HCT116 (cell line): ENCODE measurements at regions of chr2 and their contacts with region 1.

Region 1: DNA sequence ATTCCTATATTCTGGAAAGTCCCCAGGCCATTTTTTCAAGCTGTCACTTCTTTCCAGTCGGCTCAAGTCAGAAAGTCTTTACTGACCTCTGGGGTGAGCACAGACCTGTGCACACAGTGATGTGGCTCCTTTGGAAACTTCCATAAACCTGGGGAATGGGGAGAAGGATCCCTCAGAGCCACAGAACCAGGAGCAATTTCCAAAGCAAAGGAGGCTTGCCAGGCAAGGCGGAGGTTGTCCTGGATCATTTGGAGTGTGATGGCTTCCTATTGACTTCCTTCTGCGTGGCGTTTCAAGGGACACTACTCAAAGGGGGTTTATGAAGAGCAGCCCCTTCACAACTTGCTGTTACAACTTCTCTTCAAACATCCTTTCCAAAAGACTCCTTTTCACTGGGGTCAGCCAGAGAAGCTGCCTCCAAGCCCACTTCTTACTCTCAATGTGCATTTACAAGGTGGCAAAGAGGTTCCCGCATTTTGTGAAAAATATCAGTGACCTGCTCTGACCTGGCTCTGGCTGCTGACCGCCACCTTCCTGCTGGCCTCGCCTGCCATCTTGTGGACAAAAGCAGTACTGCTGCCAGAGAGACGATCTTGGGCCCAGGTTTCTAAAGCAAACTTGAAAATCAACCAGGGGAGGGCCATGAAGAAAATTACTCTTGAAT is 18.2 kb upstream of the TMEM247 start:
- DNase-seq: peak; percentile 36
- ATAC-seq: peak; percentile 78
- H3K4me3 ChIP-seq: no peak overlapping the region
- H3K27ac ChIP-seq: no peak overlapping the region
- H3K4me1 ChIP-seq: no peaks in the 10 kb centered on the region
- H3K27me3 ChIP-seq: no peaks in the 10 kb centered on the region
- CTCF ChIP-seq: peak; percentile 94 to 99 (median 99)
- POLR2A ChIP-seq: no peak
- RAD21 ChIP-seq: peak; percentile 100

Region 2: GRCh38 chr2:45993476-45993991 is 467.6 kb before region 1 on chr2:
- CTCF ChIA-PET with region 1: interaction called, 3 read pairs
- POLR2A ChIA-PET with region 1: no interaction called
- RAD21 ChIA-PET with region 1: no interaction called
- intact Hi-C with region 1: loop called (anchors 1 kb)
- DNase-seq: peak; percentile 64
- ATAC-seq: peak; percentile 86
- H3K4me3 ChIP-seq: no peak overlapping the region
- H3K27ac ChIP-seq: no peak overlapping the region
- H3K4me1 ChIP-seq: peaks cover 0 to 21% of the 10 kb centered on the region in 2 experiments; a peak in 1 of 4 replicates
- H3K27me3 ChIP-seq: no peaks in the 10 kb centered on the region
- CTCF ChIP-seq: peak; percentile 58 to 82 (median 76); a peak in 5 of 6 replicates
- POLR2A ChIP-seq: no peak
- RAD21 ChIP-seq: peak; percentile 79

Region 3: DNA sequence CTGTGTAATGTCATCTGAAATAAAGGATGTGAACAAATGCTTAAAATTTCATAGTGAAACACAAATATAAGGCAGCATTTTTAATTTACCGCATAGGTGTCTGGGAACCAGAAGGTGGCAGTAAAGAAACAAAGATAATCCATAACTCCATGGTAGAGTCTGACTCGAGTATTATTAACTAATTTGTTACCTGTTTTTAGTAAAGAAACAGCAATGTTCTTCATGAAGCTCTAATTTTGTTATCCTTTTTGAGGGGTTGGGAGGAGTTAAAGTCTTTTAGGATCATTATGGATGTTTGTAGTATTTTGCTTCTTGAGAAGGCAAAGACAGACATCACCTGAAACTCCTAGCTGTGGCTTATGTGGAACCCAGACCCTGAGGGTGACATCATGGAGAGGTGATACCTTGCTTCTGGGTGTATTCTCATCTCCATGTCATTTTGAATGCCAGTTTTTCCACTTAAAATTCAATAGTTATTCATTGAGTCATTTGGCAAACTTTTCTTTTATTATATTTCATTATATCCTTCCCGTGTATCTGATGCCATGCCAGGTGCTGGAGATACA is 450.1 kb before region 1 on chr2:
- CTCF ChIA-PET with region 1: interaction called, 3 read pairs
- POLR2A ChIA-PET with region 1: no interaction called
- RAD21 ChIA-PET with region 1: no interaction called
- intact Hi-C with region 1: loop called (anchors 1 kb)
- DNase-seq: peak; percentile 19
- ATAC-seq: peak; percentile 76
- H3K4me3 ChIP-seq: no peak overlapping the region
- H3K27ac ChIP-seq: no peak overlapping the region
- H3K4me1 ChIP-seq: peaks cover 0 to 8% of the 10 kb centered on the region in 2 experiments; a peak in 1 of 4 replicates
- H3K27me3 ChIP-seq: no peaks in the 10 kb centered on the region
- CTCF ChIP-seq: peak; percentile 56 to 82 (median 72)
- POLR2A ChIP-seq: no peak
- RAD21 ChIP-seq: peak; percentile 84

Region 4: GRCh38 chr2:46062637-46063412 is 398.3 kb before region 1 on chr2:
- CTCF ChIA-PET with region 1: interaction called, 6 read pairs
- POLR2A ChIA-PET with region 1: no interaction called
- RAD21 ChIA-PET with region 1: no interaction called
- intact Hi-C with region 1: loop called (anchors 1 kb)
- DNase-seq: peak; percentile 54
- ATAC-seq: peak; percentile 85
- H3K4me3 ChIP-seq: no peak overlapping the region
- H3K27ac ChIP-seq: no peak overlapping the region
- H3K4me1 ChIP-seq: no peaks in the 10 kb centered on the region
- H3K27me3 ChIP-seq: no peaks in the 10 kb centered on the region
- CTCF ChIP-seq: peak; percentile 74 to 91 (median 80)
- POLR2A ChIP-seq: no peak
- RAD21 ChIP-seq: peak; percentile 83

Region 5: GRCh38 chr2:47016172-47016913 is 555.2 kb after region 1 on chr2:
- CTCF ChIA-PET with region 1: no interaction called
- POLR2A ChIA-PET with region 1: no interaction called
- RAD21 ChIA-PET with region 1: no interaction called
- intact Hi-C with region 1: no loop called
- DNase-seq: peak; percentile 60
- ATAC-seq: peak; percentile 92
- H3K4me3 ChIP-seq: peak overlapping the region in 1 of 2 experiments; percentile 7; a peak in 1 of 4 replicates
- H3K27ac ChIP-seq: peak overlapping the region; percentile 66
- H3K4me1 ChIP-seq: peaks cover 23 to 30% of the 10 kb centered on the region in 2 experiments
- H3K27me3 ChIP-seq: no peaks in the 10 kb centered on the region
- CTCF ChIP-seq: peak in 2 of 3 experiments; percentile 19 to 33; a peak in 1 of 6 replicates
- POLR2A ChIP-seq: no peak
- RAD21 ChIP-seq: peak; percentile 73